MCF 10A (cell line): ENCODE measurements at regions of chr17 and their contacts with region 1.

Region 1: GRCh38 chr17:27236717-27237315 is 57.1 kb upstream of the WSB1 start:
- DNase-seq: peak; percentile 77
- H3K4me3 Mint-ChIP-seq: no peak overlapping the region
- H3K27ac Mint-ChIP-seq: no peak overlapping the region
- H3K4me1 Mint-ChIP-seq: peaks cover 8% of the 10 kb centered on the region
- H3K27me3 Mint-ChIP-seq: no peaks in the 10 kb centered on the region
- CTCF ChIP-seq: peak; percentile 93

Region 2: GRCh38 chr17:27217631-27218030 is 19.2 kb before region 1 on chr17:
- CTCF ChIA-PET with region 1: interaction called, 12 read pairs
- POLR2A ChIA-PET with region 1: no interaction called
- intact Hi-C with region 1: no loop called
- DNase-seq: no peak
- H3K4me3 Mint-ChIP-seq: no peak overlapping the region
- H3K27ac Mint-ChIP-seq: no peak overlapping the region
- H3K4me1 Mint-ChIP-seq: no peaks in the 10 kb centered on the region
- H3K27me3 Mint-ChIP-seq: no peaks in the 10 kb centered on the region
- CTCF ChIP-seq: no peak

Region 3: GRCh38 chr17:27293898-27294688 is 57.3 kb after region 1 on chr17 and contains the start of gene WSB1:
- CTCF ChIA-PET with region 1: interaction called, 29 read pairs
- POLR2A ChIA-PET with region 1: interaction called, 55 read pairs
- intact Hi-C with region 1: no loop called
- DNase-seq: peak; percentile 89
- H3K4me3 Mint-ChIP-seq: peak within 1 kb of the TSS; percentile 89
- H3K27ac Mint-ChIP-seq: peak within 1 kb of the TSS; percentile 96
- H3K4me1 Mint-ChIP-seq: peaks cover 12% of the 10 kb centered on the region
- H3K27me3 Mint-ChIP-seq: no peaks in the 10 kb centered on the region
- CTCF ChIP-seq: no peak
- total RNA-seq, gene WSB1: 93.1 and 145 TPM in 2 replicates

Region 4: DNA sequence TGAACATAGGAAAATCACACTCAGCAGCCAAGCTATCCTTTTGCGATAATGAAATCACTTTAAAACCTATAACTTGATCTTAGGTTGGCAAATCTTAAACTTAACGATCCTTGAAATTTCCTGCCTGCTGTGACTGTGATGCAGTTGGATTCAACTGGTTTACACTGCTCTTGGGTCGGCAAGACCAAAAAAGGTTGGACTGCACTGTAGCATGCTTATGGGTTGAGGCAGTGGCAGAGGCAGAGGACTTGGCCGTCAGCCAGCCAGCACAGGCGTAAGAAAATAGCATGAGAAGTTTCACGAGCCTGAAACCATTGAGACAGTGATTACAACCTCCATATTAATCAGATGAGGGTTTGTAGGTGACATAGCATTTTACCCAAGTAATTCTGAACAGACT is 78.5 kb after region 1 on chr17:
- CTCF ChIA-PET with region 1: interaction called, 33 read pairs
- POLR2A ChIA-PET with region 1: interaction called, 3 read pairs
- intact Hi-C with region 1: no loop called
- DNase-seq: peak; percentile 28
- H3K4me3 Mint-ChIP-seq: no peak overlapping the region
- H3K27ac Mint-ChIP-seq: peak overlapping the region; percentile 54
- H3K4me1 Mint-ChIP-seq: peaks cover 17% of the 10 kb centered on the region
- H3K27me3 Mint-ChIP-seq: no peaks in the 10 kb centered on the region
- CTCF ChIP-seq: no peak

Region 5: GRCh38 chr17:27332485-27333409 is 95.9 kb after region 1 on chr17:
- CTCF ChIA-PET with region 1: interaction called, 92 read pairs
- POLR2A ChIA-PET with region 1: interaction called, 30 read pairs
- intact Hi-C with region 1: loop called (anchors 1 kb)
- DNase-seq: peak; percentile 98
- H3K4me3 Mint-ChIP-seq: peak overlapping the region; percentile 71
- H3K27ac Mint-ChIP-seq: peak overlapping the region; percentile 79
- H3K4me1 Mint-ChIP-seq: peaks cover 34% of the 10 kb centered on the region
- H3K27me3 Mint-ChIP-seq: no peaks in the 10 kb centered on the region
- CTCF ChIP-seq: peak; percentile 98

Region 6: DNA sequence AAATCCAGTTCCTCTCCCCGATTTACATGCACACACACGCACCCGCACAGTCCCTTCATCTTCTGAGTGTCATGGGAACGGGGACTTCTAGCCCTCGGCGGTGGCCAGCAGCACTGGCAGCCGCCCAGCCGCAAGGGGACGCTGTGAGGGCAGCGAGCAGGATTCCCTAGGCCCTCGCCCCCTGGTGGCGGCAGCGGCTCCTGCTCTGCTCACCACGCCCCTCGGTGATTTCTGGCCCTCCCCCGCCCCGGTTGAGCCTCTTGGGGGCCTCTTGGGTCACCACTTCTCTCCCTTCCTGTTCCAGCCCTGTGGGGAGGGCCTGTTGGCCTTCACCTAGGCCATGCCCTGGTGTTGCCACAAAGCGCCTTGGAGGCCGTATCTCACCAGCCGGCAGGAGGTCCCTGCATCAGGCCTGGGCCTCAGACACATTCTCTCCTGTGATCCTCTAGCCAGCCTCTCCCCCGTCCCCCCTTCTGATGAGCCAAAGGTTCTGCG is 144.2 kb after region 1 on chr17:
- CTCF ChIA-PET with region 1: interaction called, 15 read pairs
- POLR2A ChIA-PET with region 1: interaction called, 3 read pairs
- intact Hi-C with region 1: no loop called
- DNase-seq: peak; percentile 61
- H3K4me3 Mint-ChIP-seq: no peak overlapping the region
- H3K27ac Mint-ChIP-seq: no peak overlapping the region
- H3K4me1 Mint-ChIP-seq: peaks cover 6% of the 10 kb centered on the region
- H3K27me3 Mint-ChIP-seq: no peaks in the 10 kb centered on the region
- CTCF ChIP-seq: peak; percentile 69

Region 7: GRCh38 chr17:27502526-27503324 is 265.9 kb after region 1 on chr17:
- CTCF ChIA-PET with region 1: no interaction called
- POLR2A ChIA-PET with region 1: no interaction called
- intact Hi-C with region 1: no loop called
- DNase-seq: no peak
- H3K4me3 Mint-ChIP-seq: no peak overlapping the region
- H3K27ac Mint-ChIP-seq: no peak overlapping the region
- H3K4me1 Mint-ChIP-seq: no peaks in the 10 kb centered on the region
- H3K27me3 Mint-ChIP-seq: no peaks in the 10 kb centered on the region
- CTCF ChIP-seq: no peak

Region 8: DNA sequence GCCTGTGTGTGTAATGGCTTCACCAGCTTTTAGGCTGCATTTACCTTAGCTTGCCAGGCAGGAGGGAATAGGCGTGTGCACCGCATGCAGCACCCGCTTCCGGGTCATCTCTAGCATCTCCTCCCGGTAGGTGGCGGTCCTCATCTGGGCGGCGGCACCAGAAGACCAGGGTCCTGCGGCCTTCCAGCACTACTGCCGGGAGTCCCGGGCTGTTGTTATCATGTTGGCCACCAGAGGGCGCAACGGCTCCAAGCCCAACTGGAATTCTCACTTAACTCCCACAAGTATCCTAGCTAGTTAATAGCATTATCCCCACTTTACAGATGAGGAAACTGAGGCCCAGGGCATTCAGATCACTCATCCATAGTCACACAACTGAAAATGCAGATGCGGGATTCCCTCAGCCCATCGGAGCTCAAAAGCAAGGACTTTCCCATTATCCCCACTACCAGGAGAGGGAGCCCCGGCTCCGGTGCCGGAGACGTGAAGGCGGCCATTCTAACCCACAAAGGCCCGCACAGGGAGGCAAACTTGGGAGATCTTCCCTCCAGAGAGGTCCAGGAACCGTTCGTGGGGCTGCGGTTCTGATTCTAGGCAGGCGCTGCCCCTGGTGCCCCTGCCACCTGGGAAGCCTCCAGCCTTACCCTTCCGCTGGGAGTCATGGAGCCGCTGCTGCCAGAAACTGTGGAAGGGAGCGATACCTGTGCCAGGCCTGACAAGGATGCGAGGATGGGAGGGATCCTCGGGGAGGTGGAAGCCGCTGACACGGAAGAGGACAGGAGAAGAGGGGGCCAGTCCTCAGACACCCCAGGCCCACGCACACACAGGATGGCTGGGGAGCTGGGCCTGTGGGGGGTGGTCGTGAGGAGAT is 418.1 kb after region 1 on chr17:
- CTCF ChIA-PET with region 1: interaction called, 35 read pairs
- POLR2A ChIA-PET with region 1: no interaction called
- intact Hi-C with region 1: no loop called
- DNase-seq: peak; percentile 65
- H3K4me3 Mint-ChIP-seq: no peak overlapping the region
- H3K27ac Mint-ChIP-seq: no peak overlapping the region
- H3K4me1 Mint-ChIP-seq: no peaks in the 10 kb centered on the region
- H3K27me3 Mint-ChIP-seq: peaks cover 13% of the 10 kb centered on the region
- CTCF ChIP-seq: peak; percentile 93